ENCODE measurements at regions of chr1 and their contacts with region 1.

Region 1: GRCh38 chr1:9615316-9616063 is 26.8 kb downstream of the TMEM201 start:
- DNase-seq: peak; percentile 70 to 85 (median 83)
- H3K4me3 ChIP-seq: no peak overlapping the region
- H3K27ac ChIP-seq: no peak overlapping the region
- H3K4me1 ChIP-seq: peaks cover 0 to 6% (median 3%) of the 10 kb centered on the region in 4 experiments
- H3K27me3 ChIP-seq: no peaks in the 10 kb centered on the region

Region 2: GRCh38 chr1:9539165-9539828 is 76.2 kb before region 1 on chr1 and contains the start of gene SLC25A33:
- CTCF ChIA-PET with region 1: no interaction called
- POLR2A ChIA-PET with region 1: no interaction called
- DNase-seq: peak; percentile 95 to 97 (median 96)
- H3K4me3 ChIP-seq: peak within 1 kb of the TSS; percentile 48 to 91 (median 75)
- H3K27ac ChIP-seq: peak within 1 kb of the TSS; percentile 40 to 77
- H3K4me1 ChIP-seq: peaks cover 6 to 35% (median 28%) of the 10 kb centered on the region in 4 experiments
- H3K27me3 ChIP-seq: no peaks in the 10 kb centered on the region

Region 3: GRCh38 chr1:9593492-9594465 is 21.7 kb before region 1 on chr1:
- CTCF ChIA-PET with region 1: interaction called, 14 read pairs
- POLR2A ChIA-PET with region 1: no interaction called
- DNase-seq: peak; percentile 78 to 93 (median 91)
- H3K4me3 ChIP-seq: peak overlapping the region in 4 of 7 experiments; percentile 32 to 66 (median 40)
- H3K27ac ChIP-seq: peak overlapping the region in 1 of 2 experiments; percentile 83
- H3K4me1 ChIP-seq: peaks cover 5 to 51% (median 46%) of the 10 kb centered on the region in 4 experiments
- H3K27me3 ChIP-seq: no peaks in the 10 kb centered on the region

Region 4: DNA sequence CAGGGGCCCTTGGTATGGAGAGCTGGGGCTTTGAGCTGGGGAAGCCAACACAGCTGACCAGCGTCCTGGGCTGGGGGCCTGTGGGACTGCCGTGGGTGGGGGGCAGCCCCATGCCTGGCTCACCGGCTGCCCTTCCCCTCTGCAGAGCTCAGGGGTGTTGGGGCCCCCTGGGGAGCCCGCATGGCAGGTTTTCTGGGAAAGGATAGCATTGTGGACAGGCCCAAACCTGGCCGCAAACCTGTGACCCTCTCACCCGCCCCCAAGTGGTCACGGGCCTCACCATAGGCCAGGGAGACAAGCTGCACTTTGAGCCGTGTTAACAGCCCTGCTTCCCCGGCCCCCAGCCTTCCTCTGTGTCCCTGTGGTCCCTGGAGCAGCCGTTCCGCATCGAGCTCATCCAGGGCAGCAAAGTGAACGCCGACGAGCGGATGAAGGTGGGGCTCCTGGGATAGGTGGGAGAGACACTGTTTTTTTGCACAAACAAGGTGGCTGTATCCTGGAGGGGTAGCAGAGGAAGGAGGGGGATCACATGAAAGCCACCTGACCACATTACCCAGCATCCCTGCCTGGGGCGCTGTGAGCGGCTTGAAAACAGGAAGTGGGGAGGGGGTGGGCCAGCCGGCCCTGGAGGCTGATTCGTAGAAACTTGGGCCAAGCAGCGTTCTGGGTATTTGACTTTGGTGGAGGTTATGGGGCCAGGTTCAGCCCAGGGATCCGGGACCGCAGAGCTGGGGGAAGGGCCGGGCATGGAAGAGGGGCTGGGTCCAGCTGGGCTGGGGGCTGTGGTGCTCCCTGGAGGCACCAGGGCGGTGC is 101.9 kb after region 1 on chr1:
- CTCF ChIA-PET with region 1: interaction called, 14 read pairs
- POLR2A ChIA-PET with region 1: interaction called, 3 read pairs
- DNase-seq: peak; percentile 87 to 97 (median 96)
- H3K4me3 ChIP-seq: peak overlapping the region; percentile 15 to 79 (median 62)
- H3K27ac ChIP-seq: peak overlapping the region; percentile 64 to 91
- H3K4me1 ChIP-seq: peaks cover 3 to 43% (median 31%) of the 10 kb centered on the region in 4 experiments
- H3K27me3 ChIP-seq: no peaks in the 10 kb centered on the region